Activated naive CD4-positive, alpha-beta T cell treated with anti-CD3 and anti-CD28 coated beads for 36 hours (primary cell): ENCODE measurements at regions of chr20 and their contacts with region 1.

Region 1: DNA sequence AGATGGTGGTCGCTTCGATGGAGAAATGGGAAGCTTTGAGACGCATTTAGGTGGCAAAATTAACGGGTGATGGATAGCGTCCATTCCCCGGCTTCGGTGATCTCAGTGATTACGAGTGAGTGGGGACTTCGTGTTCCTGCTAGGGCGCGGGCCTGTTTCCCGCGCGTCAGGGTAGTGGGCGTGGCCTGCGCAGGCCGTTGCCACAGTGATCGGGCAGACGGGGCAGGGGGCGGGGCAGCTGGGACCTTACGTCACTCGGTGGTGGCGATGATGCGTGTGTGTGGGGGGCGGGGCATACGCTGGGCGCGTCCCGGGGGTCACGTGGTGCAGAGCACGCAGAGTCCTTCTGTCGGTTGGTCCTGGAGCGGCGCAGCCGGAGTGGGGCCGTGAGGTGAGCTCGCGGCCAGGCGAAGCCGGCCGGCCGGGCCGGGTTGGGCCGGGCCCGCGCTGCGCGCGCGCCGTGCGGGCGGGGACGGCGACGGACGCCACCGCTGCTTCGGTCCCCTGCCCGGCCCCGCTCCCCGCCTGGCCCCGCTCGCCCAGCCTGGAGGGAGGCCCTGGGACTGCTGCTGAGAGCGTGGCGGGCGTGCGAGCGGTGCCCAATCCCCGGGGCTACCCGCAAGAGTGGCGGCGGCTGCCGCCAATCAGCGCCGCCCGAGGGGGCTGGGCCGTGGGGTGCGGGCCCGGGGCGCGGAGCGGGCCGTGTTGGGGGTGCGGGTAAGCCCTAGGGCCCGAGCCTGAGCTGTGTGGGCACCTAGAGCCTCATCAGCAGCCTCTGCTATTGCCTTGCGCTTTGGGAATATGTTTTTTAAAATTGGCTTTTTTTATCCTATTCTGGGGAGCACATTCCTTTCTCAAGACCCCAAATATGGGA is at the start of gene PHF20:
- DNase-seq: peak; percentile 100
- H3K4me3 Mint-ChIP-seq: peak within 1 kb of the TSS; percentile 80
- H3K27ac Mint-ChIP-seq: peak within 1 kb of the TSS; percentile 82
- H3K4me1 Mint-ChIP-seq: peaks cover 74% of the 10 kb centered on the region
- H3K27me3 Mint-ChIP-seq: no peaks in the 10 kb centered on the region
- total RNA-seq, gene PHF20: 39.8 to 46.0 TPM

Region 2: DNA sequence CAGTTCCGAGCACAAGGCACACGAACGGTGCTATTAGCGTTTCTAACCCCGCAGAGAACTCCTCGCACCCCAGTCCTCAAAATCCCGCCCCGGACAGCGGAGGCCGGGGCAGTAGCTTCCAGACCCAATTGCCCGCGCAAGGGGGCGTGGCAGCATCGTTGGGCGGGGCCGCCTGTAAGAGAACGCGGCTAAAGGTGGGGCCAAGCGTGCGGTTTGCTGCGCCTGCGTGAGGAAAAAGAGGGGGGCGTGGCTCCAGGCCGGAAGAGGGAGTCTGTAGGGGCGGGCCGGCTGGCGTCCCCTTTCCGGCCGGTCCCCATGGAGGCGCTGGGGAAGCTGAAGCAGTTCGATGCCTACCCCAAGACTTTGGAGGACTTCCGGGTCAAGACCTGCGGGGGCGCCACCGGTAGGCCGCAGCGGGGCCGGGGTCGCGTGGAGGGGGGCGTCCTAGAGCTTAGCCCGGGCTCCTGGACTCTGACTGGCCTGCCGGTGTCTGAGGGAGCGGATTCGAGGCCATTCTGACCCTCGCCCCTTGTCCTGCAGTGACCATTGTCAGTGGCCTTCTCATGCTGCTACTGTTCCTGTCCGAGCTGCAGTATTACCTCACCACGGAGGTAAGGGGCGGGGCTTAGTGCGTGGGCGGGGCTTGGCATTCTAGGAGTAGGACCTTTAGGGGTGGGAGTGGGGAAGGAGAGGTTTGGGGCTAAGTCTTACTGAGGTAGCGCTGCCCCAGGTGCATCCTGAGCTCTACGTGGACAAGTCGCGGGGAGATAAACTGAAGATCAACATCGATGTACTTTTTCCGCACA is 229.9 kb before region 1 on chr20 and contains the start of gene ERGIC3:
- CTCF ChIA-PET with region 1: no interaction called
- intact Hi-C with region 1: loop called (anchors 5 kb)
- DNase-seq: peak; percentile 98
- H3K4me3 Mint-ChIP-seq: peak within 1 kb of the TSS; percentile 86
- H3K27ac Mint-ChIP-seq: peak within 1 kb of the TSS; percentile 80
- H3K4me1 Mint-ChIP-seq: peaks cover 19% of the 10 kb centered on the region
- H3K27me3 Mint-ChIP-seq: no peaks in the 10 kb centered on the region
- total RNA-seq, gene ERGIC3: 107 to 113 TPM

Region 3: GRCh38 chr20:35816339-35816738 is 44.4 kb after region 1 on chr20:
- CTCF ChIA-PET with region 1: no interaction called
- intact Hi-C with region 1: loop called (anchors 5 kb)
- DNase-seq: no peak
- H3K4me3 Mint-ChIP-seq: no peak overlapping the region
- H3K27ac Mint-ChIP-seq: no peak overlapping the region
- H3K4me1 Mint-ChIP-seq: peaks cover 25% of the 10 kb centered on the region
- H3K27me3 Mint-ChIP-seq: no peaks in the 10 kb centered on the region

Region 4: DNA sequence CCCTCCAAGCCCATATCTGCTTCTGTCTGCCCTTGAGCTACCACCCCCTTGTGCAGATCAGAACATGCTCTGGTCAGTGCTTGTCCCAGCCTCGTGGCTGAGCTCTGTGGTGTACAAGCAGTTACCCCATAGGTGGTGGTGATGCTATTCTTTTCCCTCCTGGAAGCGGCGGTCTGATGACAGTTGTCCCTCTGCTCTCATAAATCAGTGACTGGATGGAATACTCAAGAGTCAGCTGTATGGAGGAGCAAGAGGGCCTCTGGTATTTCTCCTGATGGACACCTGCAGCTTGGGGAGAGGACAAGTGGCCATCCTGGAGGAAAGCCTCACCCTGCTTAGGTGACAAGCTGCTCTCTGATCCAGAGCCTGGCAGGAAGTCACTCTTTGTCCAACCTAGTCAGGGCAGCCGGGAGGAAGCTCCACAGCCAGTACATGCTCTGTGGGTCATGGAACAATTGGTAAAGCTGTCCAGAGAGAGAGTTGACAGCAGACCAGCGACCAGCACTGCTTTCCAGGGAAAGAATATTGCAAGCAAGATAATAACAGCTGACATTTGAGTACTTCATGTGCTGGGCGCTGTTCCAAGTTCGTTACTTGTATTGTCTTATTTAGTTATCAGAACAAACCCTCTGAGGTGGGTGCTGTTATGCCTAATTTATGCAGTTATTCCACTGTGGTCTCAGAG is 135.2 kb after region 1 on chr20:
- CTCF ChIA-PET with region 1: no interaction called
- intact Hi-C with region 1: no loop called
- DNase-seq: no peak
- H3K4me3 Mint-ChIP-seq: no peak overlapping the region
- H3K27ac Mint-ChIP-seq: no peak overlapping the region
- H3K4me1 Mint-ChIP-seq: peaks cover 35% of the 10 kb centered on the region
- H3K27me3 Mint-ChIP-seq: no peaks in the 10 kb centered on the region

Region 5: DNA sequence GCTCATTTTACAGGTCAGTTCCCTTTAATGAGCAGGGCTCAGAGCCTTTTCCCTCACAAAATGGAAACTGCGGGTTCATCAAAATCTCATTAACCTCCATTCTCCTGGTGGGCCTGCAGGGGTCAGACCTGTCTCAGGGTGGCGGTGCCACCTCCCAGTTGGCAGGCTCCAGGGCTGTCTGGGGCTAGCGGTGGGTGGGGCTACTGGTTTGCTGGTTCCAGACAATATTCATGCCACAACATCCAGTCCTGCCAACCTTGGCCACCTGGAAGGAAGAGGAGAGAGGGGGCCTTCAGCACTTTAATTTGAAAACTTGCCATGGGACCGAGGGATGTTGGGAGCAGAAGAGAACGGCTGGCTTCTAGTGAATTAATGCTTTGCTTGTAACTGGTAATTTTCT is 1880.0 kb after region 1 on chr20:
- CTCF ChIA-PET with region 1: no interaction called
- intact Hi-C with region 1: no loop called
- DNase-seq: peak; percentile 48
- H3K4me3 Mint-ChIP-seq: no peak overlapping the region
- H3K27ac Mint-ChIP-seq: no peak overlapping the region
- H3K4me1 Mint-ChIP-seq: no peaks in the 10 kb centered on the region
- H3K27me3 Mint-ChIP-seq: peaks cover 22% of the 10 kb centered on the region